Caco-2 (cell line): ENCODE measurements at regions of chr17 and their contacts with region 1.

Region 1: GRCh38 chr17:42819944-42820535 is 4.0 kb downstream of the BECN1 start:
- DNase-seq: peak; percentile 74 to 78
- H3K4me3 ChIP-seq: no peak overlapping the region
- H3K4me3 Mint-ChIP-seq: no peak overlapping the region
- H3K27ac Mint-ChIP-seq: no peak overlapping the region
- H3K4me1 ChIP-seq: no peaks in the 10 kb centered on the region
- H3K4me1 Mint-ChIP-seq: peaks cover 6% of the 10 kb centered on the region
- H3K27me3 ChIP-seq: no peaks in the 10 kb centered on the region
- H3K27me3 Mint-ChIP-seq: no peaks in the 10 kb centered on the region
- CTCF ChIP-seq: peak; percentile 78 to 86

Region 2: GRCh38 chr17:42577532-42578281 is 242.3 kb before region 1 on chr17 and contains the start of gene PSMC3IP:
- CTCF ChIA-PET with region 1: interaction called, 5 read pairs
- POLR2A ChIA-PET with region 1: interaction called, 7 read pairs
- intact Hi-C with region 1: loop called (anchors 10 kb)
- DNase-seq: peak; percentile 95 to 97
- H3K4me3 ChIP-seq: peak within 1 kb of the TSS; percentile 82
- H3K4me3 Mint-ChIP-seq: peak within 1 kb of the TSS; percentile 80
- H3K27ac Mint-ChIP-seq: peak within 1 kb of the TSS; percentile 84
- H3K4me1 ChIP-seq: peaks cover 4% of the 10 kb centered on the region
- H3K4me1 Mint-ChIP-seq: peaks cover 23% of the 10 kb centered on the region
- H3K27me3 ChIP-seq: no peaks in the 10 kb centered on the region
- H3K27me3 Mint-ChIP-seq: no peaks in the 10 kb centered on the region
- CTCF ChIP-seq: peak; percentile 59 to 64
- total RNA-seq, gene PSMC3IP: 24.7 and 25.2 TPM in 2 replicates

Region 3: DNA sequence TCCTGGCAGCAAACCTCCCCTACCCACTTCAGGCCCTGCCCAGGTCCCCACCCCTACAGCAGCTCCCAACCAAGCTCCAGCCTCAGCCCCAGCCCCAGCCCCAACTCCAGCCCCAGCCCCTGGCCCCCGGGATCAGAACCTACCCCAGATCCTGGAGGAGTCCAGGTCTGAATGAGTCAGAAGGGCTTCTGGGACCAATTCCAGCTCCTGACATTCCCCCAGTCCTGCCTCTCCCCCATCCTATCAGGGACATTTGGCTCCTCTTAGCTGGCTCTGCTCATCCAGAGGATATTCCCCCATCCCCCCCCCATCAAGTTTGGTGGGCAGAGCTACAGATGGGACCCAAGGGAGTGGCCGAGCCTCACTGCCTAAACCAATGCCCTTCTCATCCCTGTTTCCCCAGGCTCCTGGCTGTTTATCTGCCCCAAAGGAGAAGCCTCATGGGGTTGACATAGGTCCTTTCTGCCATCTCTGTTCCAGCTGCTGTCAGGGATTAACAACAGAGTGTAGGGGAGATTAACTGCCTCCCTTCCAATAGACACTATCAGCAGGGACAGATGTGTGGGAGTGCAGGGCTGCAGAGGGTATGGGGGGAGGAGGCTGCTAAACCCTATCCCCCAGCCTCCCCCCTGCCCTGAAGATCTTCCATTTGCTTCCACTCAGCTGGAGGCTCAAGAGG is 121.2 kb before region 1 on chr17:
- CTCF ChIA-PET with region 1: no interaction called
- POLR2A ChIA-PET with region 1: no interaction called
- intact Hi-C with region 1: no loop called
- DNase-seq: peak in 1 of 2 experiments; percentile 33
- H3K4me3 ChIP-seq: no peak overlapping the region
- H3K4me3 Mint-ChIP-seq: no peak overlapping the region
- H3K27ac Mint-ChIP-seq: no peak overlapping the region
- H3K4me1 ChIP-seq: no peaks in the 10 kb centered on the region
- H3K4me1 Mint-ChIP-seq: no peaks in the 10 kb centered on the region
- H3K27me3 ChIP-seq: no peaks in the 10 kb centered on the region
- H3K27me3 Mint-ChIP-seq: no peaks in the 10 kb centered on the region
- CTCF ChIP-seq: no peak

Region 4: GRCh38 chr17:42720996-42721583 is 99.0 kb before region 1 on chr17:
- CTCF ChIA-PET with region 1: interaction called, 5 read pairs
- POLR2A ChIA-PET with region 1: no interaction called
- intact Hi-C with region 1: loop called (anchors 1 kb)
- DNase-seq: peak in 1 of 2 experiments; percentile 76
- H3K4me3 ChIP-seq: no peak overlapping the region
- H3K4me3 Mint-ChIP-seq: no peak overlapping the region
- H3K27ac Mint-ChIP-seq: no peak overlapping the region
- H3K4me1 ChIP-seq: no peaks in the 10 kb centered on the region
- H3K4me1 Mint-ChIP-seq: no peaks in the 10 kb centered on the region
- H3K27me3 ChIP-seq: no peaks in the 10 kb centered on the region
- H3K27me3 Mint-ChIP-seq: no peaks in the 10 kb centered on the region
- CTCF ChIP-seq: peak; percentile 72 to 73

Region 5: GRCh38 chr17:42773290-42774035 is 46.6 kb before region 1 on chr17 and contains the start of gene VPS25:
- CTCF ChIA-PET with region 1: interaction called, 7 read pairs
- POLR2A ChIA-PET with region 1: interaction called, 19 read pairs
- intact Hi-C with region 1: no loop called
- DNase-seq: peak; percentile 84 to 86
- H3K4me3 ChIP-seq: peak within 1 kb of the TSS; percentile 77
- H3K4me3 Mint-ChIP-seq: peak within 1 kb of the TSS; percentile 96
- H3K27ac Mint-ChIP-seq: peak within 1 kb of the TSS; percentile 93
- H3K4me1 ChIP-seq: 0 out of 2 replicates have a peak, but pooled peaks cover 3% of the 10 kb centered on the region
- H3K4me1 Mint-ChIP-seq: no peaks in the 10 kb centered on the region
- H3K27me3 ChIP-seq: no peaks in the 10 kb centered on the region
- H3K27me3 Mint-ChIP-seq: no peaks in the 10 kb centered on the region
- CTCF ChIP-seq: no peak
- total RNA-seq, gene VPS25: 96.0 and 103 TPM in 2 replicates

Region 6: DNA sequence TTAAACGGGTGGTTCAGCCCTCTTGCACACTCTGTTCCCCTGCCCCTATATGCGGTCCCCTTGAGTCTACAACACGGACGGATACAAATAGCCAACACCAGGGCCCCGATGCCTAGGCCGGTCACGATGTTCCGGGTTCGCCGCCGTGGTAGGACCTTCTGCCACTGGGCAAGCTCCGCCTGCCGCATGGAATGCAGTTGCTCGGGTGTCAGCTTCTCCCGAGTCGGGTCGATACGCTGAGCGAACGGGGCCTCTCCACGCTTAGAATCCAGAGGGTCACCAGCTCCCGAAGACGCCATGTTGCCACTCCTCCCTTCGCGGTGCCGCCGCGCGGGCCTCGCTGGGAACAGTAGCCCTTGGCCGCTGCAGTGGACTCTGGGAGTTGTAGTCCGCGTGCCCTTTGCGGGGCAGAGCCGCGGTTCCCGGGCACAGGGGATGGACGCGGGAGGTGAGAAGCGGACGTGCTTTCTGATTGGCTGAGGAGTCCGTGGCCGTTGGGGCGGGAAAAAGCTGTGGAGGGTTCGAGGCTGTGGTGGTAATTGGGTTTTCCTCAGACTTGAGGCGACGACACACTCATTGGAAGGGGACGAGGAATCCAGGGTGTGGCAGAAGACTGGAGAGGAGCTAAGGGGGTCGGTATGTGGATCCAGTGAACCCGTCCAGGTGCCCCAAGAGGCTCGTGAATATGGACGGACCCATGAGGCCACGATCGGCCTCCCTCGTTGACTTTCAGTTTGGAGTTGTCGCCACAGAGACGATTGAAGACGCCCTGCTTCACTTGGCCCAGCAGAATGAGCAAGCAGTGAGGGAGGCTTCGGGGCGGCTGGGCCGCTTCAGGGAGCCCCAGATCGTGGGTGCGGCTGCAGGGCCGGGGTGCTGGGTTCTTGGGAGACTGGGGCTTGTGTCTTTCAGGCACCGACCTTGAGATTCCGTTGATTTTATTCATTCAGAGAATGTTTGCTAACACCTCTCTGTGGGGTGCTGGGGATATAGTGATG is 21.4 kb before region 1 on chr17 and contains the starts of genes CNTD1 and COA3:
- CTCF ChIA-PET with region 1: interaction called, 11 read pairs
- POLR2A ChIA-PET with region 1: interaction called, 7 read pairs
- intact Hi-C with region 1: no loop called
- DNase-seq: peak; percentile 93
- H3K4me3 ChIP-seq: peak within 1 kb of the TSS; percentile 72
- H3K4me3 Mint-ChIP-seq: peak within 1 kb of the TSS; percentile 77
- H3K27ac Mint-ChIP-seq: peak within 1 kb of the TSS; percentile 71
- H3K4me1 ChIP-seq: peaks cover 23% of the 10 kb centered on the region
- H3K4me1 Mint-ChIP-seq: peaks cover 8% of the 10 kb centered on the region
- H3K27me3 ChIP-seq: no peaks in the 10 kb centered on the region
- H3K27me3 Mint-ChIP-seq: no peaks in the 10 kb centered on the region
- CTCF ChIP-seq: peak in 1 of 2 experiments; percentile 1
- total RNA-seq, gene CNTD1: 1.7 and 2.2 TPM in 2 replicates
- total RNA-seq, gene COA3: 63.5 and 63.6 TPM in 2 replicates

Region 7: GRCh38 chr17:42832974-42833766 is 13.1 kb after region 1 on chr17 and contains the start of gene PSME3:
- CTCF ChIA-PET with region 1: interaction called, 11 read pairs
- POLR2A ChIA-PET with region 1: interaction called, 19 read pairs
- intact Hi-C with region 1: no loop called
- DNase-seq: peak; percentile 91 to 92
- H3K4me3 ChIP-seq: peak within 1 kb of the TSS; percentile 97
- H3K4me3 Mint-ChIP-seq: peak within 1 kb of the TSS; percentile 91
- H3K27ac Mint-ChIP-seq: peak within 1 kb of the TSS; percentile 95
- H3K4me1 ChIP-seq: 0 out of 2 replicates have a peak, but pooled peaks cover 14% of the 10 kb centered on the region
- H3K4me1 Mint-ChIP-seq: no peaks in the 10 kb centered on the region
- H3K27me3 ChIP-seq: no peaks in the 10 kb centered on the region
- H3K27me3 Mint-ChIP-seq: no peaks in the 10 kb centered on the region
- CTCF ChIP-seq: no peak
- total RNA-seq, gene PSME3: 195 and 197 TPM in 2 replicates

Region 8: GRCh38 chr17:42908872-42909700 is 89.0 kb after region 1 on chr17:
- CTCF ChIA-PET with region 1: no interaction called
- POLR2A ChIA-PET with region 1: no interaction called
- intact Hi-C with region 1: no loop called
- DNase-seq: no peak
- H3K4me3 ChIP-seq: no peak overlapping the region
- H3K4me3 Mint-ChIP-seq: no peak overlapping the region
- H3K27ac Mint-ChIP-seq: no peak overlapping the region
- H3K4me1 ChIP-seq: peaks cover 2% of the 10 kb centered on the region; the same call in 1 of the 2 replicates
- H3K4me1 Mint-ChIP-seq: peaks cover 6% of the 10 kb centered on the region
- H3K27me3 ChIP-seq: no peaks in the 10 kb centered on the region
- H3K27me3 Mint-ChIP-seq: peaks cover 6% of the 10 kb centered on the region
- CTCF ChIP-seq: no peak

Region 9: GRCh38 chr17:42997984-42998938 is 178.2 kb after region 1 on chr17 and contains the start of gene RPL27:
- CTCF ChIA-PET with region 1: interaction called, 13 read pairs
- POLR2A ChIA-PET with region 1: interaction called, 10 read pairs
- intact Hi-C with region 1: no loop called
- DNase-seq: peak; percentile 98 to 99
- H3K4me3 ChIP-seq: peak within 1 kb of the TSS; percentile 59
- H3K4me3 Mint-ChIP-seq: peak within 1 kb of the TSS; percentile 90
- H3K27ac Mint-ChIP-seq: peak within 1 kb of the TSS; percentile 99
- H3K4me1 ChIP-seq: peaks cover 16% of the 10 kb centered on the region
- H3K4me1 Mint-ChIP-seq: peaks cover 12% of the 10 kb centered on the region
- H3K27me3 ChIP-seq: no peaks in the 10 kb centered on the region
- H3K27me3 Mint-ChIP-seq: no peaks in the 10 kb centered on the region
- CTCF ChIP-seq: peak; percentile 82 to 91
- total RNA-seq, gene RPL27: 1,565 and 1,613 TPM in 2 replicates